Activated CD8-positive, alpha-beta memory T cell treated with anti-CD3 and anti-CD28 coated beads, Interleukin-2, amount 10 ng/mL, durations not matched to agents 7 days and 5 days (primary cell): ENCODE measurements at regions of chr5 and their contacts with region 1.

Region 1: GRCh38 chr5:170267431-170268152 is 30.0 kb downstream of the LCP2 start:
- DNase-seq: peak; percentile 90
- ATAC-seq: peak; percentile 45
- H3K4me3 Mint-ChIP-seq: peak overlapping the region; percentile 61
- H3K27ac Mint-ChIP-seq: peak overlapping the region; percentile 87
- H3K4me1 Mint-ChIP-seq: peaks cover 96% of the 10 kb centered on the region
- H3K27me3 Mint-ChIP-seq: no peaks in the 10 kb centered on the region

Region 2: GRCh38 chr5:170225326-170226128 is 42.1 kb before region 1 on chr5:
- CTCF ChIA-PET with region 1: interaction called, 29 read pairs
- DNase-seq: peak; percentile 86
- ATAC-seq: peak; percentile 77
- H3K4me3 Mint-ChIP-seq: no peak overlapping the region
- H3K27ac Mint-ChIP-seq: no peak overlapping the region
- H3K4me1 Mint-ChIP-seq: peaks cover 3% of the 10 kb centered on the region
- H3K27me3 Mint-ChIP-seq: no peaks in the 10 kb centered on the region

Region 3: GRCh38 chr5:170253844-170254455 is 13.6 kb before region 1 on chr5:
- CTCF ChIA-PET with region 1: interaction called, 18 read pairs
- DNase-seq: peak; percentile 87
- ATAC-seq: peak; percentile 95
- H3K4me3 Mint-ChIP-seq: no peak overlapping the region
- H3K27ac Mint-ChIP-seq: peak overlapping the region; percentile 70
- H3K4me1 Mint-ChIP-seq: peaks cover 82% of the 10 kb centered on the region
- H3K27me3 Mint-ChIP-seq: no peaks in the 10 kb centered on the region

Region 4: GRCh38 chr5:170287532-170287931 is 19.9 kb after region 1 on chr5:
- CTCF ChIA-PET with region 1: interaction called, 499 read pairs
- DNase-seq: no peak
- ATAC-seq: peak; percentile 4
- H3K4me3 Mint-ChIP-seq: peak overlapping the region; percentile 95
- H3K27ac Mint-ChIP-seq: peak overlapping the region; percentile 78
- H3K4me1 Mint-ChIP-seq: peaks cover 100% of the 10 kb centered on the region
- H3K27me3 Mint-ChIP-seq: no peaks in the 10 kb centered on the region

Region 5: DNA sequence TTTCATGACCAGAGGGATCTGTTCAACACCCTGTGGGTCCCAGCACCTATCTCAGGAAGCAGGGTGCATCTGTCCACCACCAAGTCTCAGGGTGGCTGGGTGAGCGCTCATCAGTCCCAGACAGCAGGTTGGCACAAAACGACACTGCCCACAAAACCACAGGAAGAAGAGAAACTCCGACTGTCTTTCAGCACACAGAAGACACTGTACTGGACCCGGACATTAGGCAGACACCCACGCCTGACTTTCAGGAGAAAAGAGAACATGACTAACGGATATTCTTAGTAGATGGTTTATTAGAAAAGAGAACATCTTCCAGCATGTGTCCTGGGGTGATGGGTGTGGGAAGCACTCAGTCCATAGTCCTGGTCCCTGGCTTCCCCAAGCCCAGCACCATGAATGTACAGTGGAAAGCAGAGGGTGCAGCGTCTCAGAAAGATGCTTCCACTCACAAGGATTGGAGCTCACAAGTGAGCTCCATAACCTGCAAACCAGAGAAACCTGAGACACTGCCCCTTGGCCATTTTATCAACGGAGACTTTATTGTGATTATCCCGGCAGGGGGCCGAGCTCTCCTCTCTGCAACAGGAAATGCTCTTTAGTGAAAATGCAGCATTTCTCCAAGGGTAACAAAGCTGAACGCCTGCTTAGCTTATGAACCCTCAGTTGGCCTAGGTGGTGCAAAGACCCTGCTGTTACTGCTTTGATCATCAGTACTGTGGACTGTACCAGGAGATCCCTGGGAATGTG is 65.7 kb after region 1 on chr5:
- CTCF ChIA-PET with region 1: interaction called, 122 read pairs
- DNase-seq: peak; percentile 86
- ATAC-seq: peak; percentile 46
- H3K4me3 Mint-ChIP-seq: peak overlapping the region; percentile 66
- H3K27ac Mint-ChIP-seq: no peak overlapping the region
- H3K4me1 Mint-ChIP-seq: peaks cover 27% of the 10 kb centered on the region
- H3K27me3 Mint-ChIP-seq: no peaks in the 10 kb centered on the region